A549 (cell line): ENCODE measurements at regions of chr6 and their contacts with region 1.

Region 1: DNA sequence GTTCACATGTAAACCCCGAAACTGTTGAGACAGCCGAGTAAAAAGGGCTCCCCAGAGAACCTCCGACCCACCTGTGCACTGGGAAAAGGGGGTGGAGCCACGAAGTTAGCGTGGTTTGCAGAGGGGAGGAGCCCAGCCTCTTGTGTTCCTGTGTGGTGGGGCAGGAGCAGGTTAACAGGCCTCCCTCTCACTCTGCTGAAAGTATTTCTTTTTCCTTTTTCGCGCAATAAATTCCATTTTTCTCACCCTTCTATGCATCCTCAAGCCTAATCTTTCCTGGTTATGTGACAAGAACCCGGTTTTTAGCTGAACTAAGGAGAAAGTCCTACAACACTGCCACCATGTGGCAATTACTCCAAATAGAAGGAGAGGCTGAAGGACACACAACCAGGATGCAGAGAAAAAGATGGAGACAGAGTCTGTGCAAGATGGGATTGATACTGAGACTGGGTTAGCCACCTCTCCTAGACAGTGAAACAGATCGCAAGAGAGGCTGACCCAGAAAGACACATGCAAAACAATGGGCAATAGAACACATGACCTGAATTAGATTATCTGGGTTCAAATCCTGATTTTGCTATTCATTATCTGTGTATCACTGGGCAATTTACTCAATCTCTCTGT is 168.7 kb upstream of the PRSS16 start:
- DNase-seq: peak; percentile 33 to 57
- ATAC-seq: peak; percentile 98
- H3K4me3 ChIP-seq: peak overlapping the region; percentile 44
- H3K27ac ChIP-seq: peak overlapping the region in 1 of 2 experiments; percentile 41; a peak in 2 of 6 replicates
- H3K4me1 ChIP-seq: no peaks in the 10 kb centered on the region
- CTCF ChIP-seq: peak; percentile 85
- EP300 ChIP-seq: no peak
- POLR2A ChIP-seq: no peak
- RAD21 ChIP-seq: peak; percentile 77 to 78

Region 2: GRCh38 chr6:26607434-26608230 is 471.2 kb before region 1 on chr6:
- CTCF ChIA-PET with region 1: interaction called, 21 read pairs
- POLR2A ChIA-PET with region 1: no interaction called
- DNase-seq: peak; percentile 44 to 54
- ATAC-seq: peak; percentile 90 to 96
- H3K4me3 ChIP-seq: peak overlapping the region; percentile 26; the same call in 1 of the 3 replicates
- H3K27ac ChIP-seq: no peak overlapping the region
- H3K4me1 ChIP-seq: no peaks in the 10 kb centered on the region
- CTCF ChIP-seq: peak; percentile 63
- EP300 ChIP-seq: no peak
- POLR2A ChIP-seq: no peak
- RAD21 ChIP-seq: peak; percentile 82 to 87

Region 3: DNA sequence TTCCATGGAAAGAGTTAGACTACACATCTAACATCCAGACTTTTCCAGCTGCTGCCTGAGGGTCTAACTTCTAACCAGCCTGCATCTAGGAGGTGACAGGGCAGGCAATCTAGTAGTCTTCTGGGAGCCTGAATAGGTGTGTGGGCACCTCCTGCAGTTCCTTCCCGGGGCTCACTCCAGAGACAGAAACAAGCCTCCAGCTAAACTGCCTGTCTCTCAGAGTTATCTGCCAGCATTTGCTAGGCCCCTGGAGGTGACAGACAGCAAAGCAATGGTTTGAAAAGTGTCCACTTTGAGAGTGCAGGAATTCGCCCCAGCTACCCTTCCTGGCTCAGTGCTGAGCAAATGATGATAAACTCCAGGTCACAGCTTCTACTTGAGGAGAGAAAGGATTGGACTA is 71.8 kb before region 1 on chr6:
- CTCF ChIA-PET with region 1: no interaction called
- POLR2A ChIA-PET with region 1: no interaction called
- DNase-seq: no peak
- ATAC-seq: no peak
- H3K4me3 ChIP-seq: no peak overlapping the region
- H3K27ac ChIP-seq: no peak overlapping the region
- H3K4me1 ChIP-seq: no peaks in the 10 kb centered on the region
- CTCF ChIP-seq: no peak
- EP300 ChIP-seq: no peak
- POLR2A ChIP-seq: no peak
- RAD21 ChIP-seq: no peak